Common myeloid progenitor, CD34-positive (primary cell): ENCODE measurements at regions of chr15 and their contacts with region 1.

Region 1: DNA sequence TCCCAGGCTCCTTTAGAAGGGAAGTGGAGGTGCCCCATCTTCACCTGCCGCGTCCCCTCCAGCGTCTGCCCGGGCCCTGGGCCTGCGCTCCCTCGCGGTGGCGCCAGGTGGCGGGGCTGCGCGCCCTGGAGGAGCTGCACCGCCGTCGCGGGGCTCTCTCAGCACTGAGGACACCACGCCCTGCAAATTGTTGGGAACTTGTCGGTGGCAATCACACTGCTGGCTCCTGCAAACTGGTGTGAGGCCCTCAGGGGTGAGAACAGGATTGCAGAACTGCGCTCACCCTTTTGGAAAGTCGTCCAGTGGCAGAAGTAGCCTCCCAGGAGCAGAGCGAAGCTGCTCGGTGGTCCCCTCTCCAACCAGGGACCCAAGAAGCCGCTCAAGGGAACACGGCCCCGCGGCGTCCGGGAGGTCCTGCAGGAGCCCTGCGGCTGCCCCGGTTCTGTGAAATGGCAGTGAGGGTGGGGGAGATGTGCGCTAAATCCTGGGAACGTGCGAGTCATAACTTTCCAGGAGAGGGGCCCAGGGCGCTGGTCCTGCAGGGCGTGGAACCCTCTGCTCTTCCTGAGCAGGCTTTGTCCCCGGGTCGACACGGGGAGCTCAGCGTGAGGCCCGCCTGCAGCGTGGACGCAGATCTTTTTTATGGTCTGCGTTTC is 995 bp upstream of the LRRK1 start:
- DNase-seq: peak; percentile 77 to 83 (median 81)
- H3K4me3 ChIP-seq: peak overlapping the region; percentile 15 to 91 (median 76)
- H3K27ac ChIP-seq: no peak overlapping the region
- H3K4me1 ChIP-seq: peaks cover 15 to 46% (median 34%) of the 10 kb centered on the region in 4 experiments
- H3K27me3 ChIP-seq: no peaks in the 10 kb centered on the region

Region 2: DNA sequence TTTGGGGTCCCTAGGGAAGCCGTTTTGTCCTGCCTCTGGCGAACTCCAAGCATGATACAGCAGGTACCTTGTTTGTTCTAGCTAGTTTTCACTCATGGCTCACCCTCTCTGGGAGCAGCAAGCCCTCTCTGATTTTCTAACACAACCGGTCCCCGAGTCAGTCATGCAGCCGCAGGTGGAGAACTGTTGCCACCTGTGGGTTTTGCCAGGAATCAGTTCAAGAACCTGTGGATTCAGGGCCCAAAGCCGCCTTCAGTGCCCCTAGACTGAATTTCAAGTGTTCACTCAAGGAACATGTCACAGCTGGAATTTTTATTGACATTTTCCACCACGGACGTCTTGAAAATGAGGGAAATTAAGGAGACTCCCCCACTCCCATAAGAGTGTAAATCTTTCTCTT is 12.3 kb before region 1 on chr15:
- CTCF ChIA-PET with region 1: interaction called, 37 read pairs
- POLR2A ChIA-PET with region 1: no interaction called
- DNase-seq: no peak
- H3K4me3 ChIP-seq: no peak overlapping the region
- H3K27ac ChIP-seq: no peak overlapping the region
- H3K4me1 ChIP-seq: peaks cover 0 to 10% (median 8%) of the 10 kb centered on the region in 4 experiments
- H3K27me3 ChIP-seq: no peaks in the 10 kb centered on the region

Region 3: DNA sequence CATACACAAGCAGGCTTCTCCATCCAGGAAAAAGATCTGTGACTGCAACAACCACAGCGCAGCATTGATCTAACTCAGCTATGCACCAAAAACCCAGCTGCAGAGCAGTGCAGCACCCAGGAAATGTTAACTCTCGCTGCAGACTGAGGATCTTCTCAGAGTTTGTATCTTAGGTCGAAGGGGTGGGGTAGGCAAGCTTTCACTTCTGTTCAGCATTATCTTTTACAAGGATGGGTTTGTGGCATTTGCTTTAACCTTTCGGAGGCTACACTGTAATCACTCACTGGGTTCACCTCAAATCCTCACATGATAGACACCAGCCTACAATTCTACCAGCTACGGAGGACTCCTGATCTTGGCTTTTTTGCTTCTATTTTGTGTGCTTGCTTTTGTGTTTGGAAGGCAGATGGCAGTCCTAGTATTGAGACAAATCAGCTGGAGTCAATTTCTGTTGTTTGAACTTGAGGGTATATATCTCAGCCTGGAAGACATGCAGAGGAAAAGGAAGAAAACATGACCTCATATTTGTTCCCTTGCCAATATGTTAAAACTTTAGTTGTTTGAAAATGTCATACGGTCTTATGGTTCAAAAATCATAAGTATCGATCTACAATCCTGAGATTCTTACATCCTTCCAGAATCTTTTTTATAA is 26.2 kb after region 1 on chr15:
- CTCF ChIA-PET with region 1: interaction called, 13 read pairs
- POLR2A ChIA-PET with region 1: no interaction called
- DNase-seq: no peak
- H3K4me3 ChIP-seq: no peak overlapping the region
- H3K27ac ChIP-seq: no peak overlapping the region
- H3K4me1 ChIP-seq: peaks cover 4 to 42% (median 15%) of the 10 kb centered on the region in 4 experiments
- H3K27me3 ChIP-seq: no peaks in the 10 kb centered on the region

Region 4: GRCh38 chr15:100997442-100997841 is 79.3 kb after region 1 on chr15:
- CTCF ChIA-PET with region 1: interaction called, 250 read pairs
- POLR2A ChIA-PET with region 1: no interaction called
- DNase-seq: no peak
- H3K4me3 ChIP-seq: no peak overlapping the region
- H3K27ac ChIP-seq: no peak overlapping the region
- H3K4me1 ChIP-seq: peaks cover 0 to 3% (median 1%) of the 10 kb centered on the region in 4 experiments
- H3K27me3 ChIP-seq: no peaks in the 10 kb centered on the region

Region 5: GRCh38 chr15:101008158-101009139 is 90.3 kb after region 1 on chr15:
- CTCF ChIA-PET with region 1: interaction called, 250 read pairs
- POLR2A ChIA-PET with region 1: interaction called, 5 read pairs
- DNase-seq: peak; percentile 71 to 85 (median 82)
- H3K4me3 ChIP-seq: peak overlapping the region; percentile 11 to 92 (median 72)
- H3K27ac ChIP-seq: no peak overlapping the region
- H3K4me1 ChIP-seq: peaks cover 2 to 20% (median 14%) of the 10 kb centered on the region in 4 experiments
- H3K27me3 ChIP-seq: no peaks in the 10 kb centered on the region

Region 6: DNA sequence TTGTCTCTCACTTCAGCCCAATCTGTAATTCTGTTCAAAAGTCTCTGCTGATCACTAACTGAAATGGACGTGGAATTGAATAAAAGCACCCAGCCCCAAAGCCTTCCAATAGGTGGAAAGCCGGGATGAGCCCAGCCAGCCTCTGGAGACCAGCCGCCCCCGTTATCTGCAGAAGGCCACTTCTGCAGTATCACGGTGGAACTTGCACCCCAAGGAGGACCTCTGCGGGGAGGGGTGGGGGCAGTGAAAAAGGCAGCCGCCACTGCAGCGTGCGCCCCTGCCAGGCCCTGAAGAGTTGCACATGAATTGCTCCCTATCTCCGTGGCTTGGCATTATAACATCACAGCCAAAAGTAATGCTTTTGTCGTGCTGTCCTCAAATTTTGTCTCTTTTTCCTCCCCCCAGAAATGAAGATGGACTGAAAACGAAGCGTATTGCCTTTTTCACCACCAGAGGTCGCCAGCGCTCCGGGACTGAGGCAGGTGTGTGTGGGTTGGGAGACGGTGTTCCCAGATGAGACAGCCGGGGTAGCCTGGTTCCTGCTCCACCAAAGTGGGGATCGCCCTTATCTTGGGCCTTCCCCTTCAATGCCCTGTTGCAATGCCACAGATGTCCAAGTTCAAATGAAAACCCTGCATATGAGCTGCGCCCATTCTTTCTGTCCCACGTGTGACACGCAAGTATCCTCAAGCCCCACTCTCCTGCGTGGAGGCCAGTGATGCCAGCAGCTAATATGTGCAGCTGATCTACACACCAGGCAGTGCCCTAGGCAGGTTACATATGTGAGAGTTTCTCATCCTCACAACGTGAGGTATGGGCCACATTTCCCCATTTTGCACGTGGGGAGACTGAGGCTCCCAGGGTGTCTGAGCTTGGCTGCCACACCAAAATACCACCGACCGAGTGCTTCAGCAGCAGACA is 97.0 kb after region 1 on chr15:
- CTCF ChIA-PET with region 1: interaction called, 250 read pairs
- POLR2A ChIA-PET with region 1: no interaction called
- DNase-seq: peak; percentile 50 to 63 (median 51)
- H3K4me3 ChIP-seq: no peak overlapping the region
- H3K27ac ChIP-seq: no peak overlapping the region
- H3K4me1 ChIP-seq: peaks cover 0 to 11% (median 5%) of the 10 kb centered on the region in 4 experiments
- H3K27me3 ChIP-seq: no peaks in the 10 kb centered on the region